ENCODE measurements at regions of chr1 and their contacts with region 1.

Region 1: DNA sequence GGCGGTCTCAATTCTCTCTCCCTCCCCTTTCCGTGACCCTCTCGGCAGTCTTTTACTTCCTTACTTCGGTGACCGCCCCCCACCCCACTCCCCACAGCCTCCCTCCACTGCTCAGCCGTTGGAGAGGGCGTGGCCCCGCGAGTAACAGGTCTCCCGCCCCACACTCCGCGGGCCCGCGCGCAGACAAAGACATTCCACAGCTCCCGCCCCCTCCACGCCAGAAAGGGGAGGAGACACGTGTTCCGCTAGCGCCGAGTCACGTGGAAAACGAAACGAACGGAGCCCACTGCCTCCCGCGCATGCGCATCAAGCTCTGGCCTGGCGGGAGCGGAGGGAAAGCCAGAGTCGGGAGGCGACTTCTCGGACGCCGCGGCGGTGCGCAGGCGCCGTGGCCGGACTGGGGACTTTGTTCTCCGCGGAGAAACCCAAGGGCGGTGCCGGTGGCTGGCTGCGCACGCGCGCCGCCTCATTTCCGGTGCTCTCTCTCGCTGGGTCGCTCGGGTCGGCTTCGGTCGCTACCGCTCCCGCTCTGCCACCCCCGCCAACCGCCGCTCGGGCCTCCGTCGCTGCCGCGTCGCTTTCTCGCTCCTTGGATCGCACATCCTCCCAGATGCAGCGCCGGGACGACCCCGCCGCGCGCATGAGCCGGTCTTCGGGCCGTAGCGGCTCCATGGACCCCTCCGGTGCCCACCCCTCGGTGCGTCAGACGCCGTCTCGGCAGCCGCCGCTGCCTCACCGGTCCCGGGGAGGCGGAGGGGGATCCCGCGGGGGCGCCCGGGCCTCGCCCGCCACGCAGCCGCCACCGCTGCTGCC is at the start of gene KHDRBS1:
- DNase-seq: peak; percentile 99
- H3K4me3 Mint-ChIP-seq: peak within 1 kb of the TSS; percentile 96
- H3K27ac Mint-ChIP-seq: peak within 1 kb of the TSS; percentile 91
- H3K4me1 Mint-ChIP-seq: peaks cover 23% of the 10 kb centered on the region
- H3K27me3 Mint-ChIP-seq: peaks cover 2% of the 10 kb centered on the region
- total RNA-seq, gene KHDRBS1: 200 to 203 TPM

Region 2: GRCh38 chr1:31296486-31297276 is 716.9 kb before region 1 on chr1 and contains the starts of genes SNRNP40 and ZCCHC17:
- CTCF ChIA-PET with region 1: no interaction called
- POLR2A ChIA-PET with region 1: no interaction called
- intact Hi-C with region 1: loop called (anchors 10 kb)
- DNase-seq: peak; percentile 95
- H3K4me3 Mint-ChIP-seq: no peak within 1 kb of the TSS
- H3K27ac Mint-ChIP-seq: no peak within 1 kb of the TSS
- H3K4me1 Mint-ChIP-seq: peaks cover 32% of the 10 kb centered on the region
- H3K27me3 Mint-ChIP-seq: no peaks in the 10 kb centered on the region
- total RNA-seq, gene SNRNP40: 83.7 to 96.4 TPM
- total RNA-seq, gene ZCCHC17: 24.4 to 29.6 TPM

Region 3: GRCh38 chr1:31904339-31905092 is 109.1 kb before region 1 on chr1:
- CTCF ChIA-PET with region 1: no interaction called
- POLR2A ChIA-PET with region 1: no interaction called
- intact Hi-C with region 1: no loop called
- DNase-seq: peak; percentile 28
- H3K4me3 Mint-ChIP-seq: no peak overlapping the region
- H3K27ac Mint-ChIP-seq: peak overlapping the region; percentile 8
- H3K4me1 Mint-ChIP-seq: peaks cover 13% of the 10 kb centered on the region
- H3K27me3 Mint-ChIP-seq: no peaks in the 10 kb centered on the region

Region 4: DNA sequence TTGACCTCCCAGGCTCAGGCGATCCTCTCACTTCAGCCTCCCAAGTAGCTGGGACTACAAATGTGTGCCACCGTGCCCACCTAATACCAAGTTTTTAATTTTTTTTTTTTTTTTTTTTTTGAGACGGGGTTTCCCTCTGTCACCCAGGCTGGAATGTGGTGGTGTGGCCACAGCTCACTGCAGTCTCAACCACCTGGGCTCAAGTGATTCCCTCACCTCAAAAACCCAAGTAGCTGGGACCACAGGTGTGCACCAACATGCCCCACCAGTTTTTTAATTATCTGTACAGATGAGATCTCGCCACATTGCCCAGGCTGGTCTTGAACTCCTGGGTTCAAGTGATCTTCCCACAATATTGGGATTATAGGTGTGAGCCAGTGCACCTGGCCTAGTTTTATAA is 98.2 kb before region 1 on chr1:
- CTCF ChIA-PET with region 1: no interaction called
- POLR2A ChIA-PET with region 1: no interaction called
- intact Hi-C with region 1: no loop called
- DNase-seq: no peak
- H3K4me3 Mint-ChIP-seq: no peak overlapping the region
- H3K27ac Mint-ChIP-seq: no peak overlapping the region
- H3K4me1 Mint-ChIP-seq: peaks cover 63% of the 10 kb centered on the region
- H3K27me3 Mint-ChIP-seq: no peaks in the 10 kb centered on the region

Region 5: DNA sequence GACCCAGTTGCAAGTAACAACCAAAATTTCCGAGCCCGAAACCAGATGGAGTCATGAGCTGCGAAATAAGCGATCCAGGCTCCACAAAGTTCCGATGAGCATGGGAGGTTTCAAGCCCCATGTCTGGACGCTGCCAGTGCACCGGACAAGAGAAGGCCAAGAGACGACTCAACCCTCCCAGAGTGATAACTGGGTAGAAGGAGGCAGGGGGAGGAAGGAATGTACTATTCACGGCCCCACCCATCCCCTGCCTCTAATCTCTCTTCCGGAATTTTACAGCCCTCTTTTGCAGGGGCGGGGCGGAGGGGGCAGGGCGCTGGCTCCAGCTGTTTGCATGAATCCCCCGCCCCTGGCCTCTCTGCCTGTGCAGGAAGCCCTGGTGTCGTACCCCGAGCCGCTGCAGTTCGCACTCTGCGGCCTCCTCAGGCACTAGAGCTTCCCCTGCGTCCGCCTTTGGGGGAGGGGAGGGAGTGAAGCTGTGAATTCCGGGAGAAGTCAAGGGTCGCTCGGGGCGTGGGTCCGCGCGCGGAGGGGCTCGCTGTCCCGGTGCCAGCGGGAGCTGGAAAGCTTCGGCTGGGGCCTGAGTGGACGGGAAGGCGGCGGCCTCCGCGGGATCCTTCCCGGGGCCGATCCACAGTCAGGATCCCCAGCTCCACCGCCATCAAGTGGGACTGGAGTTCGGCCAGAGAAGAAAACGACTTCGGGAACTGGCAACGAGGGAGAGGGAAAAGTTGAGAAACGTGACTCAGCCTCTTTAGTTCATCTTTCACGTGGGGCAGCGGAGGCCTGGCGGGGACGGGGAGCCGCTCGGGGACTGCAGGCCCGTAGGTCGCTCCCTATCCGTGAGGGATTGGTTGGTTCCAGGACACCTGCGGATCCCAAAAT is 69.1 kb before region 1 on chr1:
- CTCF ChIA-PET with region 1: interaction called, 3 read pairs
- POLR2A ChIA-PET with region 1: interaction called, 5 read pairs
- intact Hi-C with region 1: loop called (anchors 5 kb)
- DNase-seq: peak; percentile 89
- H3K4me3 Mint-ChIP-seq: peak overlapping the region; percentile 76
- H3K27ac Mint-ChIP-seq: peak overlapping the region; percentile 91
- H3K4me1 Mint-ChIP-seq: peaks cover 51% of the 10 kb centered on the region
- H3K27me3 Mint-ChIP-seq: no peaks in the 10 kb centered on the region

Region 6: GRCh38 chr1:31984419-31985347 is 28.9 kb before region 1 on chr1:
- CTCF ChIA-PET with region 1: no interaction called
- POLR2A ChIA-PET with region 1: no interaction called
- intact Hi-C with region 1: loop called (anchors 2 kb)
- DNase-seq: peak; percentile 67
- H3K4me3 Mint-ChIP-seq: peak overlapping the region; percentile 27
- H3K27ac Mint-ChIP-seq: peak overlapping the region; percentile 96
- H3K4me1 Mint-ChIP-seq: peaks cover 43% of the 10 kb centered on the region
- H3K27me3 Mint-ChIP-seq: no peaks in the 10 kb centered on the region

Region 7: GRCh38 chr1:32179443-32180185 is 166.0 kb after region 1 on chr1 and contains the start of gene TXLNA:
- CTCF ChIA-PET with region 1: no interaction called
- POLR2A ChIA-PET with region 1: interaction called, 4 read pairs
- intact Hi-C with region 1: loop called (anchors 1 kb)
- DNase-seq: peak; percentile 95
- H3K4me3 Mint-ChIP-seq: peak within 1 kb of the TSS; percentile 91
- H3K27ac Mint-ChIP-seq: peak within 1 kb of the TSS; percentile 96
- H3K4me1 Mint-ChIP-seq: peaks cover 38% of the 10 kb centered on the region
- H3K27me3 Mint-ChIP-seq: no peaks in the 10 kb centered on the region
- total RNA-seq, gene TXLNA: 77.4 to 78.2 TPM